ENCODE measurements at regions of chr10 and their contacts with region 1.

Region 1: DNA sequence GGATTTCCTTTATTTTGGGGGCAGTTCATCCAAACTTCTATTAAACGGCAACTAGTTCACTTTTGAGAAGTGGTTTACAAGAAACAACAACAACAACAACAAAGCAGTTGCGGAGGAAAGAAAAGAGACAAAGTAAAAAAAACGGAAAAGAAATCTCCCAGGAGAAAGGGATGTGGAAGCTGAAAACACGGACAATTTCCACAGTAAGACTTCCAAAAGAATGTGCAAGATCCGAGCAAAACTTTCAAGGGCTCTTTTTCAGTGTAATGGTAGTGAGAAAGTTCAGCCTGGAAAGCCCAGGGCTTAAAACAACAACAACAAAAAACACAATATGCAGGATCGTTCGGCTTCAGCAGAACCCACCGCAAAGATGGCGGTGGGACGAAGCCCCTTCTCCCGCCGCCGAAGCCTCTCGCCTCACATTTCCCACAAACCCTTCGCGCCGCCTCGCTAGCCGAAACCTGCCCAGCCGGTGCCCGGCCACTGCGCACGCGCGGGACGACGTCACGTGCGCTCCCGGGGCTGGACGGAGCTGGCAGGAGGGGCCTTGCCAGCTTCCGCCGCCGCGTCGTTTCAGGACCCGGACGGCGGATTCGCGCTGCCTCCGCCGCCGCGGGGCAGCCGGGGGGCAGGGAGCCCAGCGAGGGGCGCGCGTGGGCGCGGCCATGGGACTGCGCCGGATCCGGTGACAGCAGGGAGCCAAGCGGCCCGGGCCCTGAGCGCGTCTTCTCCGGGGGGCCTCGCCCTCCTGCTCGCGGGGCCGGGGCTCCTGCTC is at the start of gene TNKS2:
- DNase-seq: peak; percentile 96
- ATAC-seq: peak; percentile 64
- H3K4me3 Mint-ChIP-seq: peak within 1 kb of the TSS; percentile 94
- H3K27ac Mint-ChIP-seq: peak within 1 kb of the TSS; percentile 99
- H3K4me1 Mint-ChIP-seq: peaks cover 50% of the 10 kb centered on the region
- H3K27me3 Mint-ChIP-seq: no peaks in the 10 kb centered on the region
- total RNA-seq, gene TNKS2: 32.0 to 35.7 TPM

Region 2: DNA sequence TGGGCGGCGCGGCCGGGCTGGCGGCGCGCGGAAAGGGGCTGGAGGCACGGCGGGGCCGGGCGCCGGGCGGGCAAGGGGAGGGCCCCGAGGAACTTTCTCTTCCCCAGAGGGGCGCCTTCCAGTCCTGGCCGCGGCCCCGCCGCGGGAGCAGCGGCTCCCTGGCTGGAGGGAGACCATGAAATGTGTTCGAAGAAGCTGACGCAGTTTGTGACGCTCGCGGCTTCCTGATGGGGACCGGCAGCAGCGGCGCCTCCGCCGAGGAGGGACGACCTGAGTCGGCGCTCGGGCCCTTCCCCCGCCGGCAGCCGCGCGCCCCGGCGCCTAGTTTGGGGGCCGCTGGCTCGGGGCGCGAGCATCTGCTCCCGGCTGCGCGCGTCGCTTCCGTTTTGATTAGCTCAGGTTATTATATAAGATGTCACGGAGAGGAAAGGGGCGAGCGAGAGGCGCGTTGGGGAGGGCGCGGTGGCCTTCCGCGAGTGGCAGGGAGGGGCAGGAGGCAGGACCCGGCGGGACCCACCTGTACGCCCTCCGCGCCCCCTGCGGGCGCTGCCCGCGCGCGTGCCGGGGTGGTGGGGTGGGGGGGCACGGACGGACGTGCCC is 634.7 kb before region 1 on chr10:
- CTCF ChIA-PET with region 1: no interaction called
- POLR2A ChIA-PET with region 1: no interaction called
- intact Hi-C with region 1: loop called in 1 of 2 experiments (anchors 2 kb)
- DNase-seq: peak; percentile 83
- ATAC-seq: peak; percentile 62
- H3K4me3 Mint-ChIP-seq: peak overlapping the region; percentile 81
- H3K27ac Mint-ChIP-seq: peak overlapping the region; percentile 91
- H3K4me1 Mint-ChIP-seq: peaks cover 34% of the 10 kb centered on the region
- H3K27me3 Mint-ChIP-seq: no peaks in the 10 kb centered on the region

Region 3: GRCh38 chr10:91409869-91410637 is 388.0 kb before region 1 on chr10 and contains the start of gene HECTD2:
- CTCF ChIA-PET with region 1: no interaction called
- POLR2A ChIA-PET with region 1: no interaction called
- intact Hi-C with region 1: loop called (anchors 1 to 2 kb)
- DNase-seq: peak; percentile 90
- ATAC-seq: peak; percentile 80
- H3K4me3 Mint-ChIP-seq: peak within 1 kb of the TSS; percentile 86
- H3K27ac Mint-ChIP-seq: peak within 1 kb of the TSS; percentile 97
- H3K4me1 Mint-ChIP-seq: peaks cover 21% of the 10 kb centered on the region
- H3K27me3 Mint-ChIP-seq: peaks cover 4% of the 10 kb centered on the region
- total RNA-seq, gene HECTD2: 3.5 to 9.7 TPM

Region 4: GRCh38 chr10:91908337-91909116 is 110.5 kb after region 1 on chr10:
- CTCF ChIA-PET with region 1: interaction called, 7 read pairs
- POLR2A ChIA-PET with region 1: interaction called, 3 read pairs
- intact Hi-C with region 1: loop called (anchors 1 to 2 kb)
- DNase-seq: peak; percentile 87
- ATAC-seq: peak; percentile 90
- H3K4me3 Mint-ChIP-seq: peak overlapping the region; percentile 87
- H3K27ac Mint-ChIP-seq: peak overlapping the region; percentile 82
- H3K4me1 Mint-ChIP-seq: peaks cover 21% of the 10 kb centered on the region
- H3K27me3 Mint-ChIP-seq: peaks cover 5% of the 10 kb centered on the region

Region 5: DNA sequence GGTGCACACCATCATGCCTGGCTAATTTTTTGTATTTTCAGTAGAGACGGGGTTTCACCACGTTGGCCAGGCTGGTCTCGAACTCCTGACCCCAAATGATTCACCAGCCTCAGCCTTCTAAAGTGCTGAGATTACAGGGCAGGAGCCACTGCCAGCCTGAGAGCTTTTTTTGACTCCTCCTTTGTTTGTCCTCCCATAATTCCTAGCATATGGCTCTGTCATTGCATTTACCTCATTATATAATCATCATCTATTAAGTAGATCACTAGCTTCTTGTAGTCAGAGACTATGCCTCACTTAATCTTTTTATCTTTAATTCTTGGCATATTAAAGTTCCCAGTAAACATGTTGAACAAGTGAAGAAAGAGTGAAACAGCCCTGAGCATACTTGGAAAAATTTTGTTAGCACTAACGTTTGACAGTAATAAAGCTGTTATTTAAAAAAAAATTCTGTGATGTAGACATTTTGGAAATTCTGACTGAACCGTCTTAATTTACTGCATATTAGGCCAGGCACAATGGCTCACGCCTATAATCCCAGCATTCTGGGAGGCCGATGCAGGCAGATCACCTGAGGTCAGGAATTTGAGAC is 410.8 kb after region 1 on chr10:
- CTCF ChIA-PET with region 1: no interaction called
- POLR2A ChIA-PET with region 1: no interaction called
- intact Hi-C with region 1: loop called in 1 of 2 experiments (anchors 2 kb)
- DNase-seq: peak; percentile 8
- ATAC-seq: no peak
- H3K4me3 Mint-ChIP-seq: no peak overlapping the region
- H3K27ac Mint-ChIP-seq: no peak overlapping the region
- H3K4me1 Mint-ChIP-seq: peaks cover 12% of the 10 kb centered on the region
- H3K27me3 Mint-ChIP-seq: no peaks in the 10 kb centered on the region

Region 6: DNA sequence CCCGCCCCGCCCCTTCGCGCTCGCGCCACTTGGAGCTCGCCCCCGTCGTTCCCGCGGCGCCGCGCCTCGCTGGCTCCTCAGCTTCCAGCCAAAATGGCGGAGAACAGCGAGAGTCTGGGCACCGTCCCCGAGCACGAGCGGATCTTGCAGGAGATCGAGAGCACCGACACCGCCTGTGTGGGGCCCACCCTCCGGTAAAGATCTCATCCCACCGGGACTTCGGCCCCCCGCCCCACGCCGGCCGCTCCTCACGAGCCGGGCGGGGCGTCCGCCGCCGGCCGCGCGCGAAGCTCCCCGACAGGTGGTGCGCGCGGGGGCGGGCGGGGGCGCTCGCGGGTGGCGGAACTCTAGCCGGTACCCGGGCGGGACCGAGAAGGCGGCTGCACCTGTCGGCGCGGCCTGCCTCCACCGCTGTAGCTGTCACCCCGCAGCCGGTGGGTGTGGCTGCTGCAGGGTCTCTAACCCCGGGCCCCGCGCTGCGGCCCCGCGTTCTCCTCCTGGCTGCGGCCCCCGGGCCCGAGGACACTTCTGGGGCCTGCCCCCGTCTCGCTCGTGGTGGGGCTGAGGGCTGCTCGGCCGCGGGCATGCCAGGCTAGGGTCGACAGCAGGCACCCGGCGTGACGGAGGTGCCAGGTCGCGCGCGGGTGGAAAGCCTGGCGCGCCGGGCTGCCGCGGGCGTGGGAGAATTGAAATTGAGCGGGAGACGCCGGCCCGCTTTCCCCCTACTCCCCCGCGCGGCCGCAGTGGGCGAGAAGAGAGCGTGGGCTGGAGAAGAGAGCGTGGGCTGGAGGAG is 1050.6 kb after region 1 on chr10 and contains the start of gene EXOC6:
- CTCF ChIA-PET with region 1: no interaction called
- POLR2A ChIA-PET with region 1: no interaction called
- intact Hi-C with region 1: loop called in 1 of 2 experiments (anchors 5 kb)
- DNase-seq: peak; percentile 92
- ATAC-seq: peak; percentile 78
- H3K4me3 Mint-ChIP-seq: peak within 1 kb of the TSS; percentile 79
- H3K27ac Mint-ChIP-seq: peak within 1 kb of the TSS; percentile 90
- H3K4me1 Mint-ChIP-seq: peaks cover 33% of the 10 kb centered on the region
- H3K27me3 Mint-ChIP-seq: no peaks in the 10 kb centered on the region
- total RNA-seq, gene EXOC6: 9.7 to 12.1 TPM